Breast epithelium (tissue), 4 donors: ENCODE measurements at regions of chr11 and their contacts with region 1.

Region 1: DNA sequence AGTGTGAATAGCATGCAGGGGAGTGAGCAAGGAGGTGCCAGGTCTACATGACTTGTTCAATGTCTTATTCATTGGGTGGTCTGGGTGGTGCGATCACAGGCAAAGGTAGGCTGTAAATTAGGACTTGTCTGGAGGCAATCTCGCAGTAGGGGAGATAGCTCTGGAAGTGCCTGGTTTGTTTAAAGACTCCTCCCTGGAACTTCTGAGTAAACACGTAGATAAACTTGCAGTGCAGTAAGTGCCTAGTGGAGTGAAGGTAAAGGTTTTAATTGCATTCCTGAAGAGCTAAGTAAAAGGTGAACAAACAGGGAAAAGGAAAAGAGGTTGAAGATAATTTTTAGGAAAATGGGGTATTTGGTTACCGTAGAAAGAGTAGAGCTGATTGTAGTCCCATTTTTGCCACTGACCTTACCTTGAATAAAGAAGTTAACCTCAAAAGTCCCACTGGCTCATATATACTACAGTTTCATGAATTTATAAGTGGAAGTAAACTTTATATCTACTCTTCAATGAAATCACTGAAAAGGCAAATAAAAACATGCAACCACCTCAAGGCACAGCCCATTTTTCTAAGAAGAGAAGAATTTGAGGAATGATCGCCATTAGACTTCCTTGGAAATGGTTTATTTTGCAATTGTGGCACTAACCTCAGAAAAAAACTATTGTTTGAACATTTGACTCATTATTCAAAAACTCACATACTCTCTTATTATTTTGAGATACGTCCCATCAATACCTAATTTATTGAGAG is 44.3 kb downstream of the AASDHPPT start:
- DNase-seq: no peak
- H3K4me3 ChIP-seq: no peak overlapping the region
- H3K27ac ChIP-seq: no peak overlapping the region
- H3K4me1 ChIP-seq: no peaks in the 10 kb centered on the region
- H3K27me3 ChIP-seq: no peaks in the 10 kb centered on the region
- CTCF ChIP-seq: no peak
- POLR2A ChIP-seq: no peak

Region 2: DNA sequence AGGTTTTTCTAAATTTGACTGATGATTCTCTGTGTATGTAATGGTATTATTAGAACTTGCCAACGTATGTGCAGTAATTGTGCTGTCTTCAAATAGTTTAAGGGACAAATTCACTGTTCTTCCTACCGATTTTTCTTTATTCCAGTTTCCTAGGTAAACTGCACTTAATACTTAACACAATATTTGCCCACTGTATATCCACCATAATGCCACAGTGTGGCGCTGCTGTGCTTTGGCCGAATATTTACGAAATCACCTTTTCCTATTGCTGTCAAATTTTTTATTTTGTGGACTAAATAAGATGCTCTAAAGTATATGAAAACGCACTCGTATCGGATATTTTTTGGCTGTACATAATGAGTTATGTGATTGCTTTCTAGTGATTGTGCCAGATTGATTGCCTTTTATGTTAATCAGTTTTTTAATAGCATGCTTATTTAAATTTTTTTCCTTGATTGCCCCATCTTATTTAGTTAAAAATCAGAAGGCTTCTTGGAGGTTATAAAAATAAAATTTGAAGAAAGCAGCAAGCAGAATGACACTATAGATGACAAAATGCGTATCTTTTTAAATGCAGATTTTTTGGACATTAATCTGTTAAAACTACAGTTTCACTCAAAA is 33.8 kb before region 1 on chr11:
- intact Hi-C with region 1: loop called (anchors 2 kb)
- DNase-seq: peak; percentile 27 to 55
- H3K4me3 ChIP-seq: no peak overlapping the region
- H3K27ac ChIP-seq: no peak overlapping the region
- H3K4me1 ChIP-seq: no peaks in the 10 kb centered on the region
- H3K27me3 ChIP-seq: no peaks in the 10 kb centered on the region
- CTCF ChIP-seq: peak; percentile 54 to 71 (median 65)
- POLR2A ChIP-seq: no peak

Region 3: GRCh38 chr11:106133529-106133928 is 11.8 kb after region 1 on chr11:
- intact Hi-C with region 1: loop called (anchors 1 kb)
- DNase-seq: no peak
- H3K4me3 ChIP-seq: no peak overlapping the region
- H3K27ac ChIP-seq: no peak overlapping the region
- H3K4me1 ChIP-seq: no peaks in the 10 kb centered on the region
- H3K27me3 ChIP-seq: no peaks in the 10 kb centered on the region
- CTCF ChIP-seq: no peak
- POLR2A ChIP-seq: no peak

Region 4: DNA sequence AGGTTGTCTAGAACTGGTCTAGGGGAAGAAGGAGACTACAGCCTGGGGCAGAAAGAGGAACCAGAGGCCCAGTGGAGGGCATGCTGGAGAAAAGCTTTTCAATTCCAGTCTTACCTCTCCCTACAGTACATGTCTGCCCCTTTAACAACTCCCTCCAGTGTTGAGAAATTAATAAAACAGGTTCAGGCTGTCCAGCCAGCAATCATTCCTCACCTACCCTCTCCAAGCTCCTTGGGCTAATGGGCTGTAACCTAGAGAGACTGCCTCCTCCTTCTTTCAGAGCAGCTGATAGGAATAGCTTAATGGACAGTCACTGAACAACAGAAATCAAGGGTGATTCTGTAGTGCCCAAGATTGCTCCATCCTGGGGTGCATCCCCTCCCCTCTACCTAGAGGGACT is 1728.0 kb after region 1 on chr11:
- intact Hi-C with region 1: no loop called
- DNase-seq: no peak
- H3K4me3 ChIP-seq: no peak overlapping the region
- H3K27ac ChIP-seq: no peak overlapping the region
- H3K4me1 ChIP-seq: no peaks in the 10 kb centered on the region
- H3K27me3 ChIP-seq: no peaks in the 10 kb centered on the region
- CTCF ChIP-seq: no peak
- POLR2A ChIP-seq: no peak